ENCODE measurements at regions of chr3 and their contacts with region 1.

Region 1: GRCh38 chr3:196518966-196519717 is 4.0 kb upstream of the SMCO1 start:
- DNase-seq: peak; percentile 71
- ATAC-seq: peak; percentile 71
- H3K4me3 Mint-ChIP-seq: no peak overlapping the region
- H3K27ac Mint-ChIP-seq: no peak overlapping the region
- H3K4me1 Mint-ChIP-seq: no peaks in the 10 kb centered on the region
- H3K27me3 Mint-ChIP-seq: peaks cover 2% of the 10 kb centered on the region

Region 2: DNA sequence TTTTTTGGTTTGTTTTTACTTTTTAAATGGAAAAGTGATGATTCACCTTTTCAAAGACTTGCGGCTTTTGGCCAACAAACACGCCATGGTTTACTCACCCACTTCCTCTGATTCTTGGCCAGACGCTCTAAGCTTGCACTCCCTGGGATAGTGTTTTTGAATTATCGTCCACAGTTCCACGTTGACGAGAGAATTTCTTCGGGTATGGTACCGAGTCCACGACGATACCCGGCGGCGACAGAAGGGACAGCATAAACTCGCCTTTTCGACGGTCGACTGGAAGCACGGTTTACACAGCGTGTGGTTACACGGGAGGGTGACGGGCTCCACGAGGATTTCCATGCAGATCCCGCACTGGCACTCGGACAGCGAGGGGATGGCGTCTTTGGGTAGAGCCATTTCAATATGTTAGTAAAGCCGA is 16.4 kb before region 1 on chr3:
- CTCF ChIA-PET with region 1: interaction called, 21 read pairs
- DNase-seq: peak; percentile 88
- ATAC-seq: peak; percentile 45
- H3K4me3 Mint-ChIP-seq: peak overlapping the region; percentile 98
- H3K27ac Mint-ChIP-seq: peak overlapping the region; percentile 94
- H3K4me1 Mint-ChIP-seq: peaks cover 37% of the 10 kb centered on the region
- H3K27me3 Mint-ChIP-seq: peaks cover 7% of the 10 kb centered on the region

Region 3: DNA sequence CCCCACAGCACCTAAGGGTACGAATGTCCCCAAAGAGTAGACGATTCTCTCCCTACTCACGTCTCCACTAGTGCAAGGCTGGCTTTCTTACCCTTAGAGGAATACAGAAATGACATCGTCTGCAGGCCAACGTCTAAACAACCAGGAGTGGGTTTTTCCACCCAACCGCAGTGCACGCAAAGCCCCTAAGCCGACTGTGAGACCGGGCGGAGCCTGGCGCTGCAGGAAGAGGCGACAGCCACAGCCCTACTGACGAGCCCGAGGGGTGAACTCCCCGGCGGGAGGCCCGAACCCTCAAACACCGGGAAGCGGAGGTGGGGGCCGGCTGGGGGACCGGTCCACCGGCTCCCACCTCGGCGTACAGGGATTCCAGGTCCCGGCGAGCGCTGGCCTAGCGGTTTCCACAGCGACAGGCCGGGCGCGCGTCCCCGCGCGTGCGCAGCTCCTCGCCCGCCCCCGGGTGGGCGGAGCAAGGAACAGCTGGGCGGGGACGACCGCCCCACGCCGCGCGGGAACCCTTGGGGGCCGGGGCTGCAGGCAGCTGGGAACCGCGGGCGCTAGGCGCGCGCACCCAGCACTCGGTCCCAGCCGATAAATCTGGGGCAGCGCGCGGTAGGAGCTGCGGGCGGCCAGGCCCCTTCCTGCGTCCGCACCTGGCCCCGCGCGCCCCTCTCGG is 192.8 kb after region 1 on chr3 and contains the starts of genes CEP19 and PIGX:
- CTCF ChIA-PET with region 1: no interaction called
- DNase-seq: peak; percentile 94
- ATAC-seq: peak; percentile 85
- H3K4me3 Mint-ChIP-seq: peak within 1 kb of the TSS; percentile 90
- H3K27ac Mint-ChIP-seq: peak within 1 kb of the TSS; percentile 92
- H3K4me1 Mint-ChIP-seq: peaks cover 41% of the 10 kb centered on the region
- H3K27me3 Mint-ChIP-seq: no peaks in the 10 kb centered on the region
- total RNA-seq, gene CEP19: 4.1 to 5.4 TPM
- total RNA-seq, gene PIGX: 40.5 to 56.9 TPM

Measured in activated CD8-positive, alpha-beta memory T cell treated with anti-CD3 and anti-CD28 coated beads, Interleukin-2, amount 10 ng/mL, durations not matched to agents 7 days and 5 days (primary cell).